ENCODE measurements at regions of chr6 and their contacts with region 1.

Region 1: DNA sequence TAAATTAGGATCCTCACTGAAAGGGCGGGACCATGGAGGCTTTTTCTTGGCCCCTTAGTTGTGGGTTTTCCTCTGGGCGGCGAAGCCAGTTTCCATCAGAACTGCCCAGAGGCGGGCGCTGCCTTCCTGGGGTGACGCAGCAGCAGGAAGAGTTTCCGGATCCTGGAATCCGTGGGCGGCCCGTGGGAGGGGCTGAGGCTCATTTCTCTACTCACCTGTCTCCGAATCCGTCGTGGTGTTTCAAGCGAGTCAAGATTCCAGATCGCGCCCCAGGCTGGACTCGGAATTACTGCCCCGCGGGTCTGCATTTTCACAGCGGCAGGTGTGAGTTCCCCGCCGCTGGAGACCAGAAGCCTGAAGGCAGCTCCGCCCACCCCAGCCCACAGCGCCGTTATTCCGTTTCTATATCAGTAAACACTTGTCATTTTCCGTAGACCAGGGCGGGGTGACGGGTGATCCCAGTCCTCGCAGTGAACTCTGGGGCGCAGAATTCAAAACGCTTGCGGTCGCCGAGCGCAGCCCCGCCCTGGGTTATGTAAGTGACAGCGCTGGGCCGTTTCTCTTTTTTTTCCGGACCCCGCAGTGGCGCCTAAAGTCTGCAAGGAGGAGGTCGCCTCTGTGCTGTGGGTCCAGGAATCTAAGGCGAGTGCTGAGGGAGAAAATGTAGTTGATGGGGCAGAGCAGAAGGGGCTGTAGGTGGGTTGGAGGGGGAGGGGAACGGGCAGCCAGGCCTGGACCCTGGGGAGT is 27.2 kb upstream of the POU5F1 start:
- DNase-seq: peak; percentile 78 to 98 (median 96)
- ATAC-seq: peak; percentile 88
- H3K4me3 ChIP-seq: peak overlapping the region; percentile 82
- H3K4me3 Mint-ChIP-seq: peak overlapping the region; percentile 84 to 99 (median 89)
- H3K27ac ChIP-seq: peak overlapping the region; percentile 100
- H3K27ac Mint-ChIP-seq: peak overlapping the region; percentile 82 to 100 (median 97)
- H3K4me1 ChIP-seq: peaks cover 27 to 28% of the 10 kb centered on the region in 2 donors
- H3K4me1 Mint-ChIP-seq: peaks cover 47 to 69% (median 59%) of the 10 kb centered on the region in 7 donors
- H3K27me3 ChIP-seq: no peaks in the 10 kb centered on the region
- H3K27me3 Mint-ChIP-seq: peaks cover 0 to 3% (median 0%) of the 10 kb centered on the region in 5 donors

Region 2: GRCh38 chr6:31139599-31139998 is 58.1 kb before region 1 on chr6:
- CTCF ChIA-PET with region 1: interaction called, 11 read pairs
- POLR2A ChIA-PET with region 1: interaction called, 3 read pairs
- intact Hi-C with region 1: loop called (anchors 1 kb)
- DNase-seq: no peak
- ATAC-seq: no peak
- H3K4me3 ChIP-seq: no peak overlapping the region
- H3K4me3 Mint-ChIP-seq: peak overlapping the region in 1 of 10 donors; percentile 11
- H3K27ac ChIP-seq: no peak overlapping the region
- H3K27ac Mint-ChIP-seq: no peak overlapping the region
- H3K4me1 ChIP-seq: peaks cover 0 to 5% of the 10 kb centered on the region in 2 donors
- H3K4me1 Mint-ChIP-seq: peaks cover 4 to 8% (median 7%) of the 10 kb centered on the region in 7 donors
- H3K27me3 ChIP-seq: no peaks in the 10 kb centered on the region
- H3K27me3 Mint-ChIP-seq: peaks cover 0 to 3% (median 0%) of the 10 kb centered on the region in 5 donors

Region 3: DNA sequence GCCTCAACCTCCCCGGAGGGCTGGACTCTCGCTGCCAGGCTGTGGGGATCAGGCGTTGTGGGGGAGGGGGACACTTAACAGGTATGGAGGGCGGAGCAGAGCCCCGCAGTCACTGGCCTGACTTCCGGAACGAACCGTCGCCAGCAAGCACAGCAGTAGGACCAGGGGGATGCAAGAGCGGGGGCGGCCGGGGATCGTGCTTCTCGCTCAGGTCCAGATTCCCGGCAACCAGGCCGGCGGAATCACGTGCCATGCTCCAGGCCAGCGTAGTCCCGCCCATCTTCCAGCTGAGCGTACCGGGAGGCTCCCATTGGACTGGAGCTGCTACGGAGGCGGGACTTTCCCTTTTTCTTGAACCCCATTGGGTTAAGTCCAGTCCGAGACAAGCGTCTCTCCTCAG is 17.2 kb before region 1 on chr6:
- CTCF ChIA-PET with region 1: no interaction called
- POLR2A ChIA-PET with region 1: interaction called, 13 read pairs
- intact Hi-C with region 1: no loop called
- DNase-seq: peak in 7 of 9 donors; percentile 49 to 69 (median 59)
- ATAC-seq: peak; percentile 100
- H3K4me3 ChIP-seq: peak overlapping the region; percentile 64
- H3K4me3 Mint-ChIP-seq: peak overlapping the region; percentile 69 to 92 (median 83)
- H3K27ac ChIP-seq: peak overlapping the region; percentile 63
- H3K27ac Mint-ChIP-seq: peak overlapping the region in 8 of 9 donors; percentile 29 to 91 (median 64)
- H3K4me1 ChIP-seq: peaks cover 0 to 4% of the 10 kb centered on the region in 2 donors
- H3K4me1 Mint-ChIP-seq: peaks cover 0 to 17% (median 8%) of the 10 kb centered on the region in 7 donors
- H3K27me3 ChIP-seq: no peaks in the 10 kb centered on the region
- H3K27me3 Mint-ChIP-seq: no peaks in the 10 kb centered on the region

Region 4: GRCh38 chr6:31265926-31266325 is 68.2 kb after region 1 on chr6:
- CTCF ChIA-PET with region 1: no interaction called
- POLR2A ChIA-PET with region 1: interaction called, 35 read pairs
- intact Hi-C with region 1: no loop called
- DNase-seq: no peak
- ATAC-seq: peak; percentile 30
- H3K4me3 ChIP-seq: no peak overlapping the region
- H3K4me3 Mint-ChIP-seq: no peak overlapping the region
- H3K27ac ChIP-seq: no peak overlapping the region
- H3K27ac Mint-ChIP-seq: peak overlapping the region in 8 of 9 donors; percentile 32 to 100 (median 68)
- H3K4me1 ChIP-seq: peaks cover 16 to 23% of the 10 kb centered on the region in 2 donors
- H3K4me1 Mint-ChIP-seq: peaks cover 35 to 63% (median 47%) of the 10 kb centered on the region in 7 donors
- H3K27me3 ChIP-seq: no peaks in the 10 kb centered on the region
- H3K27me3 Mint-ChIP-seq: peaks cover 0 to 2% (median 0%) of the 10 kb centered on the region in 5 donors

Region 5: DNA sequence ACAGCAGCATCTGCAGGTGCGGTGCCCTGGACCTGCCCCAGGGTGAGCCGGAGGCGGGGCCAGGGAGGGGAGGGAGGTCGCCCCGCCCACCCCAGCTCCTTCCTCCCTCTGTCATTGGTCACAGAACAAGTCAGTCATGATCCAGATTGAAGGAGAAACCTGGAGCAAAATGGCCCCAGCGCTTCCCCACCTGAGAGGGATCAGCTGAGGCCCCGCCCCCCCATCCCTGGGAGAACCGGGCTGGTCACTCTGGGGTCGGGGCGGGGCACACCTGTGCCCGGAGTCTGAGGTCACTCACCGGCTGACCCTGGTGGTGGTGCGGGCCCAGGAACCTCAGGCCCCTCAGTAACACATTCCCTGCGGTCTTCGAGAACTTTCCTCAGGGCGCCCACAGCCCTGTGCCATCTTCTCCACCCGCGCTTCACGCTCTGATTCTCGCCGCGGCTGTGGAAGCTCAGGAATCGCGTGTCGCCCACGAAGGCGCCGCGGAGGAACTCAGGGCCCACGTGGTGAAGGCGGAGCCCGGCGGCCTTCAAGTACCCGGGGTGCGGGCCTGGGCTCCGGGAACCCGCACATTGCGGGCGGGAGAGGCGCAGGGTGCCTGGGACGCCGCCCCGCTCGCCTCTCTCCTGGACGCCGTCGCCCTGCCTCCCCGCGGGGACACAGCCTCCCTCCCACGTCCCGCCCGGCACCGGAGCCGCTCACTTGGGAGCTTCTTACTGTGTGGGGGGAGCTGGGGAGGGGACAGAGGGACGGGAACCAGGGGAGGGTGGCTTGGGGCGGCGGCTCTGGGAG is 110.5 kb after region 1 on chr6:
- CTCF ChIA-PET with region 1: interaction called, 3 read pairs
- POLR2A ChIA-PET with region 1: interaction called, 4 read pairs
- intact Hi-C with region 1: loop called in 1 of 2 experiments (anchors 1 kb)
- DNase-seq: peak; percentile 24 to 84 (median 68)
- ATAC-seq: peak; percentile 96
- H3K4me3 ChIP-seq: peak overlapping the region; percentile 71
- H3K4me3 Mint-ChIP-seq: peak overlapping the region; percentile 72 to 93 (median 88)
- H3K27ac ChIP-seq: peak overlapping the region; percentile 61
- H3K27ac Mint-ChIP-seq: peak overlapping the region in 7 of 9 donors; percentile 65 to 93 (median 82)
- H3K4me1 ChIP-seq: peaks cover 0 to 5% of the 10 kb centered on the region in 2 donors
- H3K4me1 Mint-ChIP-seq: peaks cover 0 to 13% (median 0%) of the 10 kb centered on the region in 7 donors
- H3K27me3 ChIP-seq: peaks cover 0 to 3% of the 10 kb centered on the region in 2 donors
- H3K27me3 Mint-ChIP-seq: peaks cover 0 to 50% (median 0%) of the 10 kb centered on the region in 5 donors

Region 6: DNA sequence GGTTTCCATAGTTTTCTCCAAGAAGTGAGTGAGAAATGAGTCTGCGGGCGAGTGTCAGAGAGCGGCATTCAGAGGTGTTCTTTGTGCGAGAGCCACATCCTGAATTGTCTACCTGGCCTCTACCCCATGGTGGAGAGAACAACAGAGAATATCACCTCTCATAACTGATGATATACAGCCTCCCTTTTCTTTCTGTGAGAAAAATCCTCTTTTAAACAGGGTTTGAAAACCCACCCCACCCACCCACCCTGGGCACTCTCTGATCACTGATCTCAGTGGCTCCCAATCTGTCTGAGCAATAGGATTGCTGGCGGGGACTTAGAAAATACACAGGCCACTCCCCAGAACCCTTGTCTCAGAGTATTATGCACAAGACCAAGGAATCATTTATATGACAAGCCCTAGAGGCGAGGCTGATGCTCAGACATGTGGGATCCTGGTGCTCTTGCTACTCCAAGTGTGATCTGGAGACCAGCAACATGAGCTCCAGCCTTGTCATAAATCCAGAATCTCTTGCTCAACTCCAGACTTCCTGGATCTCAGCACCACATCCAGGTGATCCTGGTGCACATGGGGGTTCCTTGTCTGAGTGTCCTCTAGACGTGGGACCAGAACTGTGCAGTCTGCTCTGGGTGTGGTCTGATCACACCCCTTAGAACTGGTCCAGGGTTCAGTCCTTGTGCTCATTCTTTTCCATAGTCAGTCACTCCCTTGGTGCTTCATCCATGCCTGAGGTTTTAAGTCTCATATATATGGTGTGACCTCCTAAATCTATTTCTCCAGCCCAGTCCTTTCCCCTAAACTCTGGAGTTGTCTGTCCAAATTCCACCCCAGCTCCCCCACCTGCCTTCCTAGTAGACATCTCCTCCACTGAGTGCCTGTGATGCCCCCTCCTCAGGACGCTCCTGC is 153.9 kb after region 1 on chr6:
- CTCF ChIA-PET with region 1: no interaction called
- POLR2A ChIA-PET with region 1: interaction called, 75 read pairs
- intact Hi-C with region 1: no loop called
- DNase-seq: peak in 8 of 9 donors; percentile 10 to 66 (median 50)
- ATAC-seq: peak; percentile 53
- H3K4me3 ChIP-seq: peak overlapping the region; percentile 19
- H3K4me3 Mint-ChIP-seq: peak overlapping the region; percentile 80 to 100 (median 98)
- H3K27ac ChIP-seq: no peak overlapping the region
- H3K27ac Mint-ChIP-seq: peak overlapping the region; percentile 56 to 100 (median 84)
- H3K4me1 ChIP-seq: peaks cover 32% of the 10 kb centered on the region in 2 donors
- H3K4me1 Mint-ChIP-seq: peaks cover 37 to 69% (median 60%) of the 10 kb centered on the region in 7 donors
- H3K27me3 ChIP-seq: no peaks in the 10 kb centered on the region
- H3K27me3 Mint-ChIP-seq: peaks cover 0 to 12% (median 0%) of the 10 kb centered on the region in 5 donors

Region 7: GRCh38 chr6:31366693-31367470 is 169.2 kb after region 1 on chr6:
- CTCF ChIA-PET with region 1: interaction called, 79 read pairs
- POLR2A ChIA-PET with region 1: interaction called, 131 read pairs
- intact Hi-C with region 1: loop called (anchors 1 kb)
- DNase-seq: peak; percentile 78 to 94 (median 86)
- ATAC-seq: peak; percentile 99
- H3K4me3 ChIP-seq: peak overlapping the region; percentile 58
- H3K4me3 Mint-ChIP-seq: peak overlapping the region; percentile 80 to 92 (median 84)
- H3K27ac ChIP-seq: peak overlapping the region; percentile 41
- H3K27ac Mint-ChIP-seq: peak overlapping the region; percentile 40 to 92 (median 79)
- H3K4me1 ChIP-seq: peaks cover 0 to 4% of the 10 kb centered on the region in 2 donors
- H3K4me1 Mint-ChIP-seq: peaks cover 3 to 32% (median 17%) of the 10 kb centered on the region in 7 donors
- H3K27me3 ChIP-seq: no peaks in the 10 kb centered on the region
- H3K27me3 Mint-ChIP-seq: peaks cover 0 to 77% (median 19%) of the 10 kb centered on the region in 5 donors